AG04450 (cell line): ENCODE measurements at regions of chr22 and their contacts with region 1.

Region 1: GRCh38 chr22:37561212-37562048 is 1.1 kb downstream of the CDC42EP1 start:
- DNase-seq: peak; percentile 63
- H3K4me3 ChIP-seq: peak overlapping the region; percentile 82
- H3K27ac ChIP-seq: peak overlapping the region; percentile 94
- H3K27me3 ChIP-seq: peaks cover 3% of the 10 kb centered on the region
- CTCF ChIP-seq: peak; percentile 84

Region 2: DNA sequence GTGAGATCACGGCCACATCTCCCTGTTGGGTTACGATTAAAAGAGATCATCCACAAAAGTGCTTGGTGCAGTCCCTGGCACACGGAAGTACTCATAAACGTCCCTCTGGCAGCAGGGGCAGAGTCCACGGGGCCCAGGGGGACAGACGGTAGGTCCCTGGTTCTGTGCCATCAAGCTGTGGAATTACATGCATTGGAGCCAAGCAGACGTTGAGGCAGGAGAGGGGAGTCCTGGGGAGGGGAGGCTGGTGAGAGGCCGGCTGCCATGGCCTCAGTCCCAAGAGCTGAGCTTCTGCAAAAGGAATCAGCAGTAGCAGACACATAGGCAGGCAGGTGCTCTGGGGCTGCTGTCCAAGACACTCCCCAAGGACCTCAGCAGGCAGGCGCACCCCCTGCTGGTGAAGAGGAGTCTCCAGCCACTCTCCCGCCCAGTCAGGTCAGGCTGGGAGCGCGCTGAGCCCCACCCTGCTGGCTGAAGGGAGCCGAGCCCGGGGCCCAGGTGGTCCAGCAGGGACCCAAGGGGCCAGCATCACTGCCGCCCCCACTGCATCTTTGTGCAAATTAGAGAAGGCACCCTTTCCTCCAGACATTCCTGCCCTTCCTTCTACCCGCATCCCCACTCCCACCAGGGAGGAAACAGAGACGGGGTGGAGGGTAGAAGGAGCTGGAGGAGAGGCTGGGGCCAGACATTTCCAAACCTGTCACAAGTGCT is 517.4 kb before region 1 on chr22:
- CTCF ChIA-PET with region 1: no interaction called
- POLR2A ChIA-PET with region 1: no interaction called
- DNase-seq: no peak
- H3K4me3 ChIP-seq: no peak overlapping the region
- H3K27ac ChIP-seq: no peak overlapping the region
- H3K27me3 ChIP-seq: no peaks in the 10 kb centered on the region
- CTCF ChIP-seq: peak; percentile 62

Region 3: DNA sequence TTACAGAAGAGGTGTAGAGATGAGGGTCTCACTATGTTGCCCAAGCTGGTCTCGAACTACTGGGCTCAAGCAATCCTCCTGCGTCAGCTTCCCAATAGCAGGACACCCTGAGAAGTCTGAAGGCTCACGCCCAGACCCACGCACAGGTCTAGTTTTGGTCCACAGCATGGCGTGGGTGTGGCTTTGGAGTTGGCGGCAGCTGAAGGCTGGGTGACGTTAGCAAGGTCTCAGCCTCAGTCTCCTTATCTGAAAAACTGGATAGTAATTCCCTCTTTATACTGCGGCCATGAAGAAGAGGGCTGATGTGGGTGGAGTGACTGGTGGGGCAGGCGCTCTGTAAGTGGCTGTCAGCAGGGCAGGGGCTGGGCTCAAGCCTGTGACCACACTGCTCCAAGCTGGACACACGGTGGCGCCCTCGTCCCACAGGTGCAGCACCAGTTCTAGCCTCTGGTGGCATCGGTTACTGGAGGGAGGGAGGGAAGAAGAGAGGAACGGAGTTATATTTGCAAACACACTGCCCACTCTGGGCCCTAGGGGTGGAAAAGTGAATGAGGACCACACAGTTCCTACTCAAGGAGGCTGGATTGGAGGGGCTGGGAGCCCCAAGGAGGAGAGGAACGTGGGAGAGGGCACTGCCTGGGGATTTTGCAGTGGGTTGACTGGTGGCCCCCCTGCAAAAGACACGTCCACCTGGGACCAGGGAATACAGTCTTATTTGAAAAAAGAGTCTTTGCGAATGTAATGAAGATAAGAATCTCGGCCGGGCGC is 22.7 kb before region 1 on chr22:
- CTCF ChIA-PET with region 1: interaction called, 375 read pairs
- POLR2A ChIA-PET with region 1: interaction called, 11 read pairs
- DNase-seq: peak; percentile 89
- H3K4me3 ChIP-seq: no peak overlapping the region
- H3K27ac ChIP-seq: no peak overlapping the region
- H3K27me3 ChIP-seq: no peaks in the 10 kb centered on the region
- CTCF ChIP-seq: peak; percentile 91

Region 4: DNA sequence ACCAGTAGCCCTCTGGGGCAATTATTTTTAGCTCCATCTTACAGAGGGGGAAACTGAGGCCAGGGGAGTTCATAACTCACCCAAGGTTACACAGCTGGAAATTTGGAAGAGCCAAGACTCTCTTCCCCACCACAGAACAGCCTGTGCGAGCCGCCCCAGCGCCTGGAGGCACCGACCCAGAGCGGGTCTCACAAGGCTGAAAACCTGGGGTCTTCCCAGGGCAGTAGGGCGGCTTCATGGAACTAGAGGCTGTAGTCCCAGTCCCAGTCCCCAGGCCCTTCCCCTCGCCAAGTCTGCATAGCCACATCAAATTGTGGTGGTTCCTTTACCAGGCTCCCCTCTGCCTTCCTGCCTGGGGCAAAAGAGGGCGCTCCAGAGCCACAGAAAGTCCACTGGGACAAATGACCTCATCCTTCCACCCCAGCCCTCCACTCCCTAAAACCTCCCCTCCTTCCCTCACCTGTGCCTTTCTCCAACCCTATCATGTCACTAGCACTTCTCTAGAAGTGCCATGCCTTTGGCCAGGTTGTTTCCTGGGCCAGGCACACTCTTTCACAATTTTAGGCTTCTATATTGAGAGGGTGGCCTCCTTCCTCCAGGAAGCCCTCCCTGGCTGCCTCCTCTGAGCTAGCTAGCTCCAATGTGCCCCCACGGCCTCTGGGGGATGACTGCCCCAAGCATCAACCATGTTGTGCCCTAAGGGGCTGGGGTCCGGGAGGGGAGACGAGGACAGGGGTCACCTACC is 16.3 kb before region 1 on chr22:
- CTCF ChIA-PET with region 1: interaction called, 375 read pairs
- POLR2A ChIA-PET with region 1: interaction called, 17 read pairs
- DNase-seq: no peak
- H3K4me3 ChIP-seq: peak overlapping the region; percentile 50
- H3K27ac ChIP-seq: peak overlapping the region; percentile 91
- H3K27me3 ChIP-seq: no peaks in the 10 kb centered on the region
- CTCF ChIP-seq: peak; percentile 83

Region 5: DNA sequence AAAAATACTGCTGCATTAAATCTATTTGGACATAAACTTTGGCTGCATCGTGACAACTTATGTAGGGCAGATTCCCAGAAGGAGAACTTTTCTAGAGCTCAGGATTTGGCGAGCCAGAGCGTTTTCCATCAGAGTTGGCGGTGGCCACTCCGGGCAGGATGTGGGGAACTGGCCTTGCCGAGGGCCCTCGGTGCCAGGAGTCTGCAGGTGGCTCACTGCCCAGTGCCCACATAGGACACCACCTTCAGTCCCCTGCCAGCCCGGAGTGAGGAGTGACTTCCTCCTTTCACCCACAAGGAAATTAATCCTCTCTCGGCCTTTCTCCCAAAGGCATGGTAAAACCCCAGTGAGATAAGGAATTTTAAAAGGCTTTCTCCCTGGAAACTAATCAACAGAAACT is 20.1 kb after region 1 on chr22:
- CTCF ChIA-PET with region 1: interaction called, 7 read pairs
- POLR2A ChIA-PET with region 1: interaction called, 10 read pairs
- DNase-seq: no peak
- H3K4me3 ChIP-seq: no peak overlapping the region
- H3K27ac ChIP-seq: no peak overlapping the region
- H3K27me3 ChIP-seq: peaks cover 21% of the 10 kb centered on the region
- CTCF ChIP-seq: no peak

Region 6: GRCh38 chr22:37807410-37808293 is 246.2 kb after region 1 on chr22 and contains the start of gene GCAT:
- CTCF ChIA-PET with region 1: no interaction called
- POLR2A ChIA-PET with region 1: no interaction called
- DNase-seq: peak; percentile 87
- H3K4me3 ChIP-seq: peak within 1 kb of the TSS; percentile 84
- H3K27ac ChIP-seq: peak within 1 kb of the TSS; percentile 84
- H3K27me3 ChIP-seq: no peaks in the 10 kb centered on the region
- CTCF ChIP-seq: no peak
- polyA plus RNA-seq, gene GCAT: 8.9 and 13.2 TPM in 2 replicates